OCI-LY7 (cell line): ENCODE measurements at regions of chr9 and their contacts with region 1.

Region 1: GRCh38 chr9:91036826-91037510 is 235.3 kb downstream of the SYK start:
- DNase-seq: peak; percentile 72
- H3K4me3 ChIP-seq: no peak overlapping the region
- H3K27ac ChIP-seq: peak overlapping the region; percentile 83
- H3K4me1 ChIP-seq: peaks cover 46% of the 10 kb centered on the region
- CTCF ChIP-seq: peak; percentile 68

Region 2: DNA sequence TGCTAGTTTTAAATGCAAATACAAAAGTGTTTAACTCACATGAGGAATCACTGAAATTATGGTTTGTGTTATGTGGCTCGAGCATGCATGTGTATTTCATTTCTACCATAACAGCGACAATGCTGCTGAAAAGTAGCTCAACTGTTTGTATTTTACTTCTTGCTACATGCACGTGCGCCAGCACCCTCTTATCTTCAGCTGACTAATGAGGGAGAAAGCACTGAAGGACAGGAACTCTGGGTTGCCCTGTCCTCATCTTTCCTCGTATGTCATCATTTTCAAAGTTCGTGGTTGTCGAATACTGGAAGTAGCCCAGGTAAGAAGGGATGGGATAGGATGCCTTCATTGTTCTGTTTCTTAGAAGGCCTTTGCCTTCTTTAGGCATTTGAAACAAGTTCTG is 115.0 kb before region 1 on chr9:
- CTCF ChIA-PET with region 1: interaction called, 3 read pairs
- POLR2A ChIA-PET with region 1: no interaction called
- intact Hi-C with region 1: loop called (anchors 2 kb)
- DNase-seq: no peak
- H3K4me3 ChIP-seq: no peak overlapping the region
- H3K27ac ChIP-seq: no peak overlapping the region
- H3K4me1 ChIP-seq: peaks cover 41% of the 10 kb centered on the region
- CTCF ChIP-seq: no peak

Region 3: DNA sequence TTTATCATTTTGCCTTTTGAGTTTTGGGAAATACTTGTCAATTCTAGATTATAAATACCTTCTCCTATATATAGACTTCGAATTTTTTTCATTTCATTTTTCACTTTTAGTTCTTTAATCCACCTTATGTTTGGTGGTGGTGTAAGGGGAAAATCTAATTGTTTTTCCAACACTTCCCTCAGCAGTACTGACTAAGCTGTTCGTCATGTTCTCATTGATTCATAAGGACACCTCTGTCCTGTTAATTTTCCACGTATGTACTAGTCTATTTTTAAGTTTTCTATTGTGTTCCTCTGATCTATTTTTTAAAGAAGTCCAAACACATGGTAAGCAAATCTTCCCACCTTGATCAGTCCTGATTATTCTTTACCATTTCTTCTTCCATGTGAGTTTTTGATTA is 18.9 kb after region 1 on chr9:
- CTCF ChIA-PET with region 1: no interaction called
- POLR2A ChIA-PET with region 1: no interaction called
- intact Hi-C with region 1: no loop called
- DNase-seq: no peak
- H3K4me3 ChIP-seq: no peak overlapping the region
- H3K27ac ChIP-seq: no peak overlapping the region
- H3K4me1 ChIP-seq: peaks cover 12% of the 10 kb centered on the region
- CTCF ChIP-seq: no peak

Region 4: DNA sequence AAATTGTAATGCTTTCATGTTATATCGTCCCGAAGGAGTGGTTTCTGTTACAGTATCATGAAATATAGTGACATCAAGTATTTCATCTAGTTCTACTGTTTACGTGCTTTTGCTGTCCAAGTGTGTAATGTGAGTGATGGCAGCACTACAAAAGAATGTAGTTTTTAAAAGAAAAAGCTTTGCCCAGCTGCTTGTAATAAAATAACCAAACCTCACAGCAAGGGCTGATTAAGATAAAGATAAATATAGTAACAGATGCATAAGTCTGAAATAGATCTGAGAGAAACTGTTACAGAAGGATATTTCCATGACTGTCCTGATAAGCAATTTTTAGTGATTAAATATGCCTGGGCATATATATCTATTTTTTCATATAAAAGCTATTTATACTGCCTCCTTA is 218.4 kb after region 1 on chr9:
- CTCF ChIA-PET with region 1: no interaction called
- POLR2A ChIA-PET with region 1: no interaction called
- intact Hi-C with region 1: loop called (anchors 5 kb)
- DNase-seq: no peak
- H3K4me3 ChIP-seq: no peak overlapping the region
- H3K27ac ChIP-seq: no peak overlapping the region
- H3K4me1 ChIP-seq: no peaks in the 10 kb centered on the region
- CTCF ChIP-seq: no peak

Region 5: DNA sequence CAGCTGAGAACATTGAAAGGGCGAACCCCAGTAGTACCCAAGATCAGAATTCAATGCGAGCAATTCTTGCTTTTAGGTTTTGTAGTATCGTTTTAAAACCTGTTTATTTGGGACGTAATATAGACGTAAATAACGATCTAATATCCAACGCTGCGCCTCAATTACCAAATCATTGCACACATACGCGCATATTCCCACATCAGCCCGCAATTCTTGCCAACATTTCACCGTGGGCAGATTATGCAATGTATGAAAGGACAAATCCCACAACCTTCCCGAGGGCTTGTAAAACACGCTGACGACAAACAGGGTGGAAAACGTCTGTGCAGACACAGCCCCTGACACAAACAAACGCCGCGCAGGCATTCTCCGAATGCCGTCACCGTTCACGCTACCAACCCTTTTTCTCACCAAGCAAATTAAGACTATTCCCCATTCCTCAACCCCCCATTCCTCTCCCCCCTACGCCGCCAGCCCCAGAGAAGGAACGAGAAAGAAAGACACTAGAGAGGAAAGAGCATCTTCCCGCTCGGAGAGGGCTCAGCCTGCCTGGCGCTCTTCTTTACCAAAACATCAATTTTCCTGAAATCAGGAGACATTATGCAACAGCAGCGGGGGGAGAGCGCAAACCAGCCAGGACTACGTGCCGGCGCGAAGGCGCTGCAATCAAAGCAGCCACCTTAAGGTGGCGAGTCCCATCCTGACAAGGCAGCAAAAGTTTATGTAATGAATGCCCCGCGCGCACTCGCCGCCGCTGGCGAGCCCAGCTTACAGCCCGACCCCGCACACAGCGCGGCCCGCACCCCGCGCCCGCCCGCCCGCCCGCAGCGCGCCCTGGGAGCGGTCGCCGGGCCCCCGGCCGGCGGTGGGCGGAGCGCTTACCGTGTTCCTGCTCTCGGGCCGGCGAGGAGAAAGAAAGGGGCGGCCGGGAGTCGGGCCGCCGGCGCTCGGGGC is 386.1 kb after region 1 on chr9:
- CTCF ChIA-PET with region 1: interaction called, 3 read pairs
- POLR2A ChIA-PET with region 1: no interaction called
- intact Hi-C with region 1: loop called (anchors 2 kb)
- DNase-seq: peak; percentile 76
- H3K4me3 ChIP-seq: peak overlapping the region; percentile 85
- H3K27ac ChIP-seq: no peak overlapping the region
- H3K4me1 ChIP-seq: peaks cover 22% of the 10 kb centered on the region
- CTCF ChIP-seq: peak; percentile 49

Region 6: DNA sequence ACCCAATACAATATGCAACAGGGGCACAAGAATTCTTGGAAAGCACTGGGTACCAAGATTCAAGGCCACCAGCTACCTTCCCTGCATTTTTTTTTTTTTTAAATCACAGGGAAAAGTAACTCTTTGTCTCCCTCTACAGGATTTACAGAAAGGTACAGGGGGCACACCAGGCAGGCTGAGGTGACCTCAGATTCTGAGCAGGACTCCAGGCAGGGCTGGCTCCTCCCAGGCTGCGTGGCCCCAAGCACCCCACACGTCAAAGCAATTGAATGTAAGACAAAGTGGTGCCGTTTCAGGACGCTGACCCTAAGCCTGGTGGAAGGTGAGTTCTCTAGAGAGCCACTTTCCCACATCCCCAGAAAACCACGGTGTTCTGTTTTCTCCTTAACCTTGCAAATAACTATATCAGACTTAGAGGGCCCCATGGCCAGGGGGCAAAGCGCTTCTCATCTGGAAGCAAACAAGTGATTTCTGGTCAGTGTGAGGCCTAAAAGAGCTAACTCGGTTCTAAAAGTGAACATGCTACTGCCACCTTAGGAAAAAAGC is 690.4 kb after region 1 on chr9:
- CTCF ChIA-PET with region 1: no interaction called
- POLR2A ChIA-PET with region 1: interaction called, 3 read pairs
- intact Hi-C with region 1: loop called (anchors 5 kb)
- DNase-seq: peak; percentile 61
- H3K4me3 ChIP-seq: no peak overlapping the region
- H3K27ac ChIP-seq: no peak overlapping the region
- H3K4me1 ChIP-seq: peaks cover under 1% of the 10 kb centered on the region
- CTCF ChIP-seq: peak; percentile 86